Mammary epithelial cell (primary cell): ENCODE measurements at regions of chr2 and their contacts with region 1.

Region 1: DNA sequence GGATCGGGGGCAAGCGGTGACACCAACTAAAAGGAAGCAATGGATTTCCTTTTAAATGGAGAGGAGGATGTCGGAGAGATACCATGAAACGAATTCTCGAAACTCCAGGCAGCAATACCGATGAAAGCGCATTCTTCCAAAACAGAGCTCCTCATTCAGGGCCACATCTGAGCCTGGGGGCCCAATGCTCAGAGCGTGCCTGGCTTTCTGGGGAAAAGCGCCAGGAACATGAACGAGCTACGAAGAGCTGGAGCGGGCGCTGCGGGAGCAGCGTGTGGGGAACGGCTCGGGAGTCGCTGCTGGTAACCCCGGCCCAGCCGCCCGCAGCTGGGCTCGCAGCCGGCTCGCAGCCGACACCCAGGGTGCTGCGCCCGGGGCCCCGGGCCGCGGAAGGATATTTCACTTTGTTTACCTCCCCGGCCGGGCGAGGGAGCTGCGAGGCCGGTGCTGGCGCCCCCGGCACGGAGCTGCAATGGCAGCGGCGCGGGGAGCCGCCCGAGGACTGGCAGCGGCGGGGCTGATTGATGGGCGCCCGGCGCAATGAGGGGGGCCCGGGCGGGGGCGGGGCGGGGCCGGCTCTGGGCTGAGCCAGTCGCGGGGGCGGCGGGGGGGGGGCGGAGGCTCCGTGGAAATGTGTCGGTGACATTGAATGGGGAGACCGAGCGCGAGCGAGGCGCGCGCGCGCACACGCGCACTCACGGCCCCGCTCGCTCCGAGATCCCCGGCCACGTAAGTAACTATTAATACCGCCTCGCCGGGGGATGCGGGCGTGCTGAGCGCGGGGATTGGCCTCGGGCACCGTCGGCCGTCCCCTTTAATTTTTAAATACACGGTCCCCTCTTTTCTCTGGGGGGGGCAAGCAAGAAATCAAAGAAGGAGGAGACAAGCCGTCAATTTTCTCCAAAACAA is at the start of gene TRIB2:
- DNase-seq: peak; percentile 81
- H3K4me3 ChIP-seq: peak within 1 kb of the TSS; percentile 76 to 89 (median 87)
- H3K27ac ChIP-seq: peak within 1 kb of the TSS; percentile 83
- H3K4me1 ChIP-seq: peaks cover 36% of the 10 kb centered on the region
- H3K27me3 ChIP-seq: no peaks in the 10 kb centered on the region
- CTCF ChIP-seq: no peak
- total RNA-seq, gene TRIB2: 9.0 to 30.7 TPM

Region 2: DNA sequence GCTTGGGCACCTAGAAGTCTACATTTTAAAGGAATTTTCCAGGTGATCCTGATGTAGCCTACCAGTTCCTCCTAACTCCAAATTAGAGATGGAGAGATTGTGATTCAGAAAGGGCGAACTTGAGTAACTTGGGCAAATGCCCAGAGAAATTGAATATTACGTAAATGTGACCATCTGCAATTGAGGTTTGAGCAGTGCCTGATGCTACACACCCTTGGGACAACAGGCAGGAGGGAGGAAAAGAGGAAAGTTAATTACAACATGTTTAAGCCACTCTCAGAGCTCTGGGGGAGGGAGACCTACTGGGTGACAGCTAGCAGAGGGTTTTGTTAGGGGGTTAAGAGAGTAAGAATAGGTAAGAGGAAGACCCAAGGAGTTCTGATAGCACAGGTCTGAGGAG is 761.2 kb before region 1 on chr2:
- CTCF ChIA-PET with region 1: interaction called, 3 read pairs
- dilution Hi-C with region 1: no loop called
- in situ Hi-C with region 1: no loop called
- intact Hi-C with region 1: loop called (anchors 5 kb)
- DNase-seq: peak; percentile 58
- H3K4me3 ChIP-seq: no peak overlapping the region
- H3K27ac ChIP-seq: no peak overlapping the region
- H3K4me1 ChIP-seq: peaks cover 8% of the 10 kb centered on the region
- H3K27me3 ChIP-seq: no peaks in the 10 kb centered on the region
- CTCF ChIP-seq: no peak

Region 3: DNA sequence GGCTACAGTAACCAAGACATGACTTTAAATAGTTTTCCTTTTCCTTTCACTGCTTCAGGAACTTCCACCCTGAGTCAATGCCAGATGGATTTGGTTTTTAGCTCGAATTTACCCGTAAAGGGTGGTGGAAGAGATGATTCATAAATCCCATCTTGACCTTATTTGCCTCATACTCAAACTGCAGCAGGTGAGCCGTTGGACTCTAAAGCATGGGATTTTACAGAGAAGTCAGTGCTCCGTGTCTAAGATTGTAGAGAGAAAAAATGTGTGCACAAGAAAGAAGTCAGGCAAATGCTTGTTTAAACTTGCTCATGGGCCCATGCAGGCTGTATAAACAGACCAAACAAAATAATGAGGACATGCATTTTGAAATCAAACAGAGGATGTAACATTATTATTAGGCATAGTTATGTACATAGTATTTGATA is 369.5 kb before region 1 on chr2:
- CTCF ChIA-PET with region 1: no interaction called
- dilution Hi-C with region 1: no loop called
- in situ Hi-C with region 1: no loop called
- intact Hi-C with region 1: loop called (anchors 2 kb)
- DNase-seq: peak; percentile 90
- H3K4me3 ChIP-seq: no peak overlapping the region
- H3K27ac ChIP-seq: no peak overlapping the region
- H3K4me1 ChIP-seq: peaks cover 17% of the 10 kb centered on the region
- H3K27me3 ChIP-seq: no peaks in the 10 kb centered on the region
- CTCF ChIP-seq: no peak

Region 4: GRCh38 chr2:12456293-12457151 is 260.0 kb before region 1 on chr2:
- CTCF ChIA-PET with region 1: no interaction called
- dilution Hi-C with region 1: no loop called
- in situ Hi-C with region 1: loop called in 1 of 2 experiments (anchors 25 kb)
- intact Hi-C with region 1: loop called (anchors 1 kb)
- DNase-seq: peak; percentile 96
- H3K4me3 ChIP-seq: peak overlapping the region in 2 of 3 experiments; percentile 28 to 35
- H3K27ac ChIP-seq: peak overlapping the region; percentile 67
- H3K4me1 ChIP-seq: peaks cover 8% of the 10 kb centered on the region
- H3K27me3 ChIP-seq: no peaks in the 10 kb centered on the region
- CTCF ChIP-seq: no peak

Region 5: GRCh38 chr2:12587729-12588522 is 128.6 kb before region 1 on chr2:
- CTCF ChIA-PET with region 1: no interaction called
- dilution Hi-C with region 1: no loop called
- in situ Hi-C with region 1: no loop called
- intact Hi-C with region 1: loop called (anchors 5 kb)
- DNase-seq: peak; percentile 90
- H3K4me3 ChIP-seq: no peak overlapping the region
- H3K27ac ChIP-seq: peak overlapping the region; percentile 67
- H3K4me1 ChIP-seq: peaks cover 12% of the 10 kb centered on the region
- H3K27me3 ChIP-seq: no peaks in the 10 kb centered on the region
- CTCF ChIP-seq: no peak

Region 6: DNA sequence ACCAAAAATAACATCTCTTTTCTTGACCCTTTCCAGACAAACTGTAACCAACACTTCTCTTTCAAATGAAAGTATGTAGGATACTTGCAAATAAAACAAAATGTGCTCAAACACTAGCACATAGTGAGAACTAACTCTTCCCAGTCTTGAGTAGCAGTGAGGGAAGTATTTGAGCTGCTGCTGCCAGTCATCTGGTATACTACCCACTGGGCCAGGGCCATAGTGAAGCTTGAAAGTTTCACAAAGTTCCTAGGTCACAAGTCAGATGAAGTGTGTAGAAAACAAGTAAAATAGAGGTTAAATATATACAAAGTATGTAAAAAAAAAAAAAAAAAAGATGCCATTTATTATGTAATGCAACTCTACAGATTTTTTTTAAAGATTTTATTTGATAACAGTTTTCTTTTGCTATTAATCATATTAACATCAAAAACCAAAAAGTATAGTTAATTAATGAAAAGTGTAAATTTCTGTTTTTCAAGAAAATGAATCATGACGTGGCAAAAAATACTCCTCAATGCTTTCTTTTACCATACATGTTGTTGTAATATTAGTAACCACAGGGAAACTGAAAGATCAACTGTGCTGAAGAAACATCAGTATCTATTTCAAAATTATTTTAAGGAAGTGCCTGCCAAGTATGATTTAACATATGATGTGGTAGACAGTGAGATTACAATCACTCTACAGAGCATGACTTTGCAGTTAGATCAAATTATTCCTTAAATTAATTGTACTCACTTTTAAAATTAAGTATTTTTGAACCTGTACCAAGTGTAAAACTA is 21.4 kb before region 1 on chr2:
- CTCF ChIA-PET with region 1: no interaction called
- dilution Hi-C with region 1: no loop called
- in situ Hi-C with region 1: no loop called
- intact Hi-C with region 1: no loop called
- DNase-seq: peak; percentile 44
- H3K4me3 ChIP-seq: no peak overlapping the region
- H3K27ac ChIP-seq: no peak overlapping the region
- H3K4me1 ChIP-seq: peaks cover 5% of the 10 kb centered on the region
- H3K27me3 ChIP-seq: no peaks in the 10 kb centered on the region
- CTCF ChIP-seq: no peak